GM12878 (cell line): ENCODE measurements at regions of chr17 and their contacts with region 1.

Region 1: GRCh38 chr17:31388770-31389661 is 2.5 kb upstream of the RAB11FIP4 start:
- DNase-seq: no peak
- ATAC-seq: peak; percentile 85
- H3K4me3 ChIP-seq: no peak overlapping the region
- H3K27ac ChIP-seq: no peak overlapping the region
- H3K4me1 ChIP-seq: no peaks in the 10 kb centered on the region
- H3K27me3 ChIP-seq: peaks cover 12% of the 10 kb centered on the region in 2 experiments
- CTCF ChIP-seq: peak; percentile 57 to 88 (median 71)
- EP300 ChIP-seq: no peak
- POLR2A ChIP-seq: no peak
- RAD21 ChIP-seq: peak; percentile 58

Region 2: GRCh38 chr17:31378638-31379037 is 10.4 kb before region 1 on chr17:
- CTCF ChIA-PET with region 1: interaction called, 13 read pairs
- POLR2A ChIA-PET with region 1: no interaction called
- RAD21 ChIA-PET with region 1: interaction called, 4 read pairs
- SMC1A ChIA-PET with region 1: interaction called, 9 read pairs
- in situ Hi-C with region 1: no loop called
- intact Hi-C with region 1: no loop called
- DNase-seq: no peak
- ATAC-seq: peak; percentile 60
- H3K4me3 ChIP-seq: no peak overlapping the region
- H3K27ac ChIP-seq: no peak overlapping the region
- H3K4me1 ChIP-seq: peaks cover 10% of the 10 kb centered on the region
- H3K27me3 ChIP-seq: no peaks in the 10 kb centered on the region
- CTCF ChIP-seq: no peak
- EP300 ChIP-seq: no peak
- POLR2A ChIP-seq: no peak
- RAD21 ChIP-seq: no peak

Region 3: DNA sequence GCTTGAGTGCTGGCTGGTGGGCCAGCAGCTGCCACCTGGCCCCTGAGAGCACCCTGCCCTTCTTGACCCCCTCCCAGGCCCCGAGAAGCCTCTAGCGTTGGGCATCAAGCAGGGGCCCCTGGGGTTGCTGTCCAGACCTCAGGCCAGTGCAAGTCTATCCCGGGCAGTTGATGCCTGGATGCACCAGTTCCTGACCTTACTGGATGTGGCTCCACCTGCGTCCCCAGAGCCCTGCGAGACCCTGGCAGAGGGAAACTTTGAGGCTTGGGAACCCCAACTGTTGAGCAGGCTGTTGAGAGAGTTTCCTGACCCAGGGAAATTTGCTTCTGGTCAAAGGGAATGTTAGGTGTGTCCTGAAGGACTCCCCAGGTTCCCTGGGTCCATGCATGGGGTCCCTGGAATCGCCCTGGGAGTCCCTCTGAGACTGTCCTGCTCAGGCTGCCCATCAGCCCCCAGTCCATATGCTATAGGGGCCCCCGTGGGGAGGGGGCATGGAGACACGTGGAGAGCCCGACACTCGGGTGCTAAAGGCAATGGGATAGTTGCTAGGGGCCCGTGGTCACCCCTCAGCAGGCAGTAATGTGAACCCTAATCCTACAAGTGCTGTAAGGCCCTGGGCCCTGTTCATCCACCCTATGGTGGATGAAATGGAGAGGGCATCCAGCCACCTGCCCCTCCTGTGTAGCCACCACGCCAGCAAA is 48.9 kb after region 1 on chr17:
- CTCF ChIA-PET with region 1: interaction called, 6 read pairs
- POLR2A ChIA-PET with region 1: no interaction called
- RAD21 ChIA-PET with region 1: interaction called, 5 read pairs
- SMC1A ChIA-PET with region 1: no interaction called
- in situ Hi-C with region 1: no loop called
- intact Hi-C with region 1: loop called (anchors 2 kb)
- DNase-seq: no peak
- ATAC-seq: no peak; the same call in 2 of the 3 replicates
- H3K4me3 ChIP-seq: no peak overlapping the region
- H3K27ac ChIP-seq: no peak overlapping the region
- H3K4me1 ChIP-seq: no peaks in the 10 kb centered on the region
- H3K27me3 ChIP-seq: no peaks in the 10 kb centered on the region
- CTCF ChIP-seq: no peak
- EP300 ChIP-seq: no peak
- POLR2A ChIP-seq: no peak
- RAD21 ChIP-seq: no peak